PC-3 (cell line): ENCODE measurements at regions of chr3 and their contacts with region 1.

Region 1: DNA sequence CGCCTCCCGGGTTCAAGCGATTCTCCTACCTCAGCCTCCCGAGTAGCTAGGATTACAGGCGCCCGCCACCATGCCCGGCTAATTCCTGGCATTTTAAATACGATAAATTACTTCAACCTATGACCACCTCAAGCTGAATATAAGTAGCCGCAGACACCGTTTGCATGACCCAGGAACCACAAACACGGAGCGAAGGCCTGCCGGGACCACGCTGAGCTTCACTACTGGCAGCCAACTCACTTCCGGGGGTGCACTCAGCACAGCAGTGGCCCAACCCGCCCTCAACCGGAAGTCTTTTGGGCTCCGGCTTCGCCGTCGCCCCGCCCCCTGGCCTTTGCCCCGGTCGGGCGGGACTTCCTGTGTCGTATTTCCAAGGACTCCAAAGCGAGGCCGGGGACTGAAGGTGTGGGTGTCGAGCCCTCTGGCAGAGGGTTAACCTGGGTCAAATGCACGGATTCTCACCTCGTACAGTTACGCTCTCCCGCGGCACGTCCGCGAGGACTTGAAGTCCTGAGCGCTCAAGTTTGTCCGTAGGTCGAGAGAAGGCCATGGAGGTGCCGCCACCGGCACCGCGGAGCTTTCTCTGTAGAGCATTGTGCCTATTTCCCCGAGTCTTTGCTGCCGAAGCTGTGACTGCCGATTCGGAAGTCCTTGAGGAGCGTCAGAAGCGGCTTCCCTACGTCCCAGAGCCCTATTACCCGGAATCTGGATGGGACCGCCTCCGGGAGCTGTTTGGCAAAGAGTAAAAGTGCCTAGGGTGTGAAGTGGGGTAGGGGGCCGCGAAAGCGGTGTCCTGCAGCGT is at the start of gene TIMMDC1:
- DNase-seq: peak; percentile 99
- ATAC-seq: peak; percentile 95
- H3K4me3 ChIP-seq: peak within 1 kb of the TSS; percentile 97
- H3K27ac ChIP-seq: peak within 1 kb of the TSS; percentile 74
- H3K4me1 ChIP-seq: peaks cover 29% of the 10 kb centered on the region
- H3K27me3 ChIP-seq: no peaks in the 10 kb centered on the region
- CTCF ChIP-seq: no peak
- total RNA-seq, gene TIMMDC1: 107 and 142 TPM in 2 replicates

Region 2: GRCh38 chr3:119463171-119464169 is 34.9 kb before region 1 on chr3 and contains the start of gene TMEM39A:
- CTCF ChIA-PET with region 1: no interaction called
- POLR2A ChIA-PET with region 1: interaction called, 7 read pairs
- intact Hi-C with region 1: loop called (anchors 1 kb)
- DNase-seq: peak; percentile 99
- ATAC-seq: peak; percentile 95
- H3K4me3 ChIP-seq: peak within 1 kb of the TSS; percentile 84
- H3K27ac ChIP-seq: peak within 1 kb of the TSS; percentile 36
- H3K4me1 ChIP-seq: peaks cover 27% of the 10 kb centered on the region
- H3K27me3 ChIP-seq: no peaks in the 10 kb centered on the region
- CTCF ChIP-seq: no peak
- total RNA-seq, gene TMEM39A: 49.1 and 56.5 TPM in 2 replicates

Region 3: GRCh38 chr3:119469381-119470189 is 28.8 kb before region 1 on chr3:
- CTCF ChIA-PET with region 1: no interaction called
- POLR2A ChIA-PET with region 1: no interaction called
- intact Hi-C with region 1: loop called (anchors 1 kb)
- DNase-seq: peak; percentile 53
- ATAC-seq: peak; percentile 43
- H3K4me3 ChIP-seq: peak overlapping the region; percentile 85
- H3K27ac ChIP-seq: no peak overlapping the region
- H3K4me1 ChIP-seq: peaks cover 16% of the 10 kb centered on the region
- H3K27me3 ChIP-seq: no peaks in the 10 kb centered on the region
- CTCF ChIP-seq: no peak; the same call in 1 of the 2 replicates

Region 4: GRCh38 chr3:119647171-119647570 is 148.8 kb after region 1 on chr3:
- CTCF ChIA-PET with region 1: no interaction called
- POLR2A ChIA-PET with region 1: no interaction called
- intact Hi-C with region 1: no loop called
- DNase-seq: no peak
- ATAC-seq: no peak
- H3K4me3 ChIP-seq: no peak overlapping the region
- H3K27ac ChIP-seq: no peak overlapping the region
- H3K4me1 ChIP-seq: peaks cover 24% of the 10 kb centered on the region
- H3K27me3 ChIP-seq: no peaks in the 10 kb centered on the region
- CTCF ChIP-seq: no peak